Pancreas (tissue), 10 donors: ENCODE measurements at regions of chr1 and their contacts with region 1.

Region 1: DNA sequence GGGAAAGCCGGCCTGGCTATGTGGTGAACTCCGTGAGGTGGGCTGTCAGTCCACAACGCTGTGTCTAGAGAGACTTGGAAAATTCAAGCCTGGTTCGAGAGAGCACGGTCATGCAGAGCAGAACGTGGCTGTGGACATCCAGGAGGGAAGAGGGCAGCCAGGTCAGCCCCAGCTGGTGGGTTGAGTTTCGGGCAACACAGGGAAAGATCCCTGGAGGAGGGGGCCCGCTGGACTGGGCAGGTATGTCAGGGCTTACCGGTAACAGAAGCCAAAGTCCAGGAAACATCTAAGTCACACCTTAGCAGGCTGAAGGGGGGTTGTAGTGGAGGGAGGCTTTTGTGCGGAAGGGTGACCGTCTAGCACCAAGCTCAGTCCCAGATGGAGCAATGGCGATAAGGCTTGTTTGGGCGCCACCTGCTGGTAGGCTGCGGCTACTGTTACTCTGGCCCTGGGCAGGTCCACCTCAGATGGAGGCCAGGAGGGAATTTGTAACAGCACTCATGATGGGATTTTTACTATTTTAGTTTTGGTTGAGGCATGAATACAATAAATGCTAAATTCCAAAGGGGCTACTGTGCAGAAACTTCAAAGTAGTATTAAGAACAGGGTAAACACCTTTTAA is 143.3 kb upstream of the ZNF644 start:
- DNase-seq: peak; percentile 52 to 92 (median 78)
- ATAC-seq: peak; percentile 97 to 99 (median 98)
- H3K4me3 ChIP-seq: no peak overlapping the region
- H3K27ac ChIP-seq: no peak overlapping the region
- H3K4me1 ChIP-seq: no peaks in the 10 kb centered on the region
- H3K27me3 ChIP-seq: no peaks in the 10 kb centered on the region
- CTCF ChIP-seq: peak; percentile 78 to 90 (median 88)

Region 2: GRCh38 chr1:90721210-90722194 is 443.6 kb before region 1 on chr1:
- intact Hi-C with region 1: loop called in 1 of 3 experiments (anchors 10 kb)
- DNase-seq: peak in 2 of 6 donors; percentile 43 to 53
- ATAC-seq: peak in 3 of 4 donors; percentile 62 to 67 (median 65)
- H3K4me3 ChIP-seq: no peak overlapping the region
- H3K27ac ChIP-seq: no peak overlapping the region
- H3K4me1 ChIP-seq: peaks cover 0 to 27% (median 0%) of the 10 kb centered on the region in 3 donors
- H3K27me3 ChIP-seq: peaks cover 14 to 81% (median 26%) of the 10 kb centered on the region in 4 donors
- CTCF ChIP-seq: peak; percentile 52 to 71 (median 60)

Region 3: GRCh38 chr1:92219028-92219427 is 1053.9 kb after region 1 on chr1:
- intact Hi-C with region 1: no loop called
- DNase-seq: no peak
- ATAC-seq: no peak
- H3K4me3 ChIP-seq: no peak overlapping the region
- H3K27ac ChIP-seq: no peak overlapping the region
- H3K4me1 ChIP-seq: no peaks in the 10 kb centered on the region
- H3K27me3 ChIP-seq: no peaks in the 10 kb centered on the region
- CTCF ChIP-seq: no peak